Heart left ventricle (tissue), 16 donors: ENCODE measurements at regions of chr7 and their contacts with region 1.

Region 1: DNA sequence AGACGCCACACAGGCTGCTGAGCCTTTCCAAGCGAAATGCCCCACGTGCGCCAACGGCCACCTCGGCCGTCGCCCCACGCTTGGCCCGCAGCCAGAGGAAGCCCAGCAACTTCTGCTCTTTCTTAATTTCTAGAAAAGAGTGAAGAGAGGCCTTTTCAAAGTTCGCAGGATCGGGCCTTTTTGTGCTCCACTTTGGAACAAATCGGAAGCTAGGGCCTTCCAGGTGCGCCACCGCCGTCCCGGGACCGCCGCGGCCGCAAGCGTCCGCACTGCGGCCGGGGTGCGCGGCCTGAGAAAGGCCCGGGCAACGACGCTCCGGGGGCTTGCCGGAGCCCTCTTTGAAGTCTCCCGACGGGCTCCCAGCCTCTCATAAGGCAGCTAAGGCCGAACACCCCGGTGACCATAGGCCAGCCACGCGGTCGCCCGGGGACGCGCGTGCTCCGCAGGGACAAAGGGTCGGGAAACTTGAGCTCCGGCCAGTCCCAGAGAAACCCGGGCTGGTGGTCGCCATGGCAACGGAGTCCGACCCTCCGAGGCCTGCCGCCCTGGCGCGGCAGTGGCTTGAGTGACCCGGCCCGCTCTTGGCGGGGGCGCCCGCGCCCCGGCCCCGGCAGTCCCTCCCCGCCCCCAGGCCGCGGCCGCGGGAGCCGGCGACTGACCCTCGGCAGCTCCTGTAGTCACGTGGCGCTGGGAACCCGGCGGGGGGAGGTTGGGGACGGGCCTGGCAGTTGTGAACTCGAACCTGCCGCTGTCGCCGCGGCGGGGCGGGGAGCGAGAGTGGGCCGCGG is at the start of gene REPIN1:
- DNase-seq: peak; percentile 95 to 97 (median 96)
- ATAC-seq: peak; percentile 78 to 90 (median 84)
- H3K4me3 ChIP-seq: peak within 1 kb of the TSS; percentile 64 to 97 (median 90)
- H3K27ac ChIP-seq: peak within 1 kb of the TSS; percentile 90 to 99 (median 97)
- H3K4me1 ChIP-seq: peaks cover 2 to 54% (median 27%) of the 10 kb centered on the region in 12 donors
- H3K27me3 ChIP-seq: no peaks in the 10 kb centered on the region
- CTCF ChIP-seq: no peak
- POLR2A ChIP-seq: peak in 1 of 2 donors; percentile 52
- total RNA-seq, gene REPIN1: 90.4 to 141 (median 100) TPM

Region 2: GRCh38 chr7:150356265-150356897 is 11.9 kb before region 1 on chr7:
- intact Hi-C with region 1: no loop called
- DNase-seq: no peak
- ATAC-seq: no peak
- H3K4me3 ChIP-seq: no peak overlapping the region
- H3K27ac ChIP-seq: no peak overlapping the region
- H3K4me1 ChIP-seq: peaks cover 0 to 12% (median 0%) of the 10 kb centered on the region in 12 donors
- H3K27me3 ChIP-seq: no peaks in the 10 kb centered on the region
- CTCF ChIP-seq: peak; percentile 49 to 79 (median 68)
- POLR2A ChIP-seq: no peak

Region 3: DNA sequence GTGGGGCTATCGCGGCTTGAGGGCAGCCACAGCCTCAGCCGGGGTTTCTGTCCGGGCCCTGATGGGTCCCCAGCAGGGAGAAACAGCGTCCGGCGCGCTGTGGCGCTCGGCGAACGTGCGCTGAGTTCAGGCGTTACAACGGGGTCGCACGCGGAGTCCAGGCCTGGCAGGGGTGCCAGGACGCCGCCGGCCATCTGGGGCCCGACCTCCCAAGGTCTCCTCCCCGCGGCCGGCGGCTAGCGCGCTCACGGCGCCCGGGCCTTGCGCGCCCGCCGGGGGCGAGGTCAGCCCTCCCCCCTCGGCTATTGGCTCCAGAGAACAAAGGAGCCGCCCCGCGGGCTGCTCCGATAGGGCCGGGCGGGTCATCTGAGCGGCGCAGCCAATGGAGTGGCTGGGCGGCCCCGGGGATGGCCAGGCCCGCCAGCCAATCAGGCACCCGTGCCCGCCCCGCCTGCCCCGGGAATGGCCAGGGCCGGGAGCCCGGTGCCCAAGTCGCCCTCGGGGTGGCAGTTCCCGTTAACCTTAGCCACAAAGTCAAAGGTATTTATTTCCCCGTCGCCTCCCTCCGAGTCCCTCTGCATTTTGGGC is 10.7 kb after region 1 on chr7 and contains the start of gene ZNF775:
- intact Hi-C with region 1: loop called in 1 of 10 experiments (anchors 1 kb)
- DNase-seq: peak; percentile 97 to 99 (median 98)
- ATAC-seq: peak; percentile 97 to 99 (median 98)
- H3K4me3 ChIP-seq: peak within 1 kb of the TSS; percentile 71 to 100 (median 86)
- H3K27ac ChIP-seq: peak within 1 kb of the TSS; percentile 81 to 99 (median 92)
- H3K4me1 ChIP-seq: peaks cover 0 to 50% (median 21%) of the 10 kb centered on the region in 12 donors
- H3K27me3 ChIP-seq: no peaks in the 10 kb centered on the region
- CTCF ChIP-seq: peak in 2 of 12 donors; percentile 1 to 8
- POLR2A ChIP-seq: peak; percentile 48 to 95
- total RNA-seq, gene ZNF775: 2.1 to 5.0 (median 3.3) TPM

Region 4: GRCh38 chr7:150404805-150405583 is 36.7 kb after region 1 on chr7:
- intact Hi-C with region 1: loop called in 8 of 10 experiments (anchors 1 to 5 kb)
- DNase-seq: peak; percentile 91 to 95 (median 93)
- ATAC-seq: peak; percentile 85 to 96 (median 94)
- H3K4me3 ChIP-seq: peak overlapping the region; percentile 54 to 80 (median 72)
- H3K27ac ChIP-seq: peak overlapping the region; percentile 86 to 98 (median 96)
- H3K4me1 ChIP-seq: peaks cover 0 to 34% (median 22%) of the 10 kb centered on the region in 12 donors
- H3K27me3 ChIP-seq: no peaks in the 10 kb centered on the region
- CTCF ChIP-seq: peak in 7 of 12 donors; percentile 6 to 43 (median 13)
- POLR2A ChIP-seq: peak in 1 of 2 donors; percentile 78

Region 5: DNA sequence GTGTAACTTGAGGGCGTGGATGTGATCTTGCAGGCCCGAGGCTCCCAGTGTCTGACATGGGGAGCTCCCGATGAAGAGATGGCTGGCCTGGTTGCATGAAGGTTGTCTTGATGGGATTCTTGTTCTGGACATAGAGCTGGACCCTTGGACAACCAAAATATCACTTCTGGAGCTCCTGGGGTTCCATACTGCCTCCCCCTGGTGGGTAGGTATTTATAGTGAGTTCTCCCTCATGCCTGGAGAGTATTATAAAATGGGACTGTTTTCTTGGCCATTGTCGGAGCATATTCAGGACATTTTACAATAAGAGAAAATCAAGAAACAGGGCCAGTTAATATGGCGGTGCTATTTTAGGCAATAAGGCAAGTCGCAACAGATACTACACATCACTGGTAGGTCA is 49.6 kb after region 1 on chr7:
- intact Hi-C with region 1: no loop called
- DNase-seq: peak in 1 of 5 donors; percentile 4
- ATAC-seq: no peak
- H3K4me3 ChIP-seq: no peak overlapping the region
- H3K27ac ChIP-seq: no peak overlapping the region
- H3K4me1 ChIP-seq: peaks cover 0 to 6% (median 0%) of the 10 kb centered on the region in 12 donors
- H3K27me3 ChIP-seq: no peaks in the 10 kb centered on the region
- CTCF ChIP-seq: no peak
- POLR2A ChIP-seq: no peak

Region 6: DNA sequence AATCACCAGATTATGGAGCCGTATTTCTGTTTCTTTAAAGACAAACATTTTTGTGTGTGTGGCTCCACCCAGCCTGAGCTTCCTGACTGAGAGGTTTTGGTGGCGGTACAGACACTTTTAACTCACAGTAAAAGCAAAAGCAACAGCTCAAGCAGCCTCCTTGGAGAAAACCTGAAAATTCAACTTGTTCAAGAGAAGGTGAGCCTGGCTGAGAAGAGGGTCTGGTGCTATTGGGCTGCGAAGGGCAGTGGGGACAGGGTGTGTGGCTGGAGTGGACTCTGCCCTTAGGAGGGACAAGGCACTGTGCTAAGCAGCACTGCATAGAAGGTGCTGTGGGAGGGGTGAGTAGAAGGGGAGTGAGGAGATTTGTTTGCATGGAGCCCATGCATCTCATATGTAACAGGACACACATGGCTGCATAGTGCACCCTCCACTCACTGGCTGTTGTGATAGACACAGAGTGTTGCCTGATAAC is 146.5 kb after region 1 on chr7 and contains the start of gene GIMAP7:
- intact Hi-C with region 1: no loop called
- DNase-seq: peak in 3 of 5 donors; percentile 34 to 38 (median 35)
- ATAC-seq: peak; percentile 75 to 87 (median 78)
- H3K4me3 ChIP-seq: peak within 1 kb of the TSS; percentile 24 to 69 (median 60)
- H3K27ac ChIP-seq: peak within 1 kb of the TSS; percentile 66 to 92 (median 85)
- H3K4me1 ChIP-seq: peaks cover 0 to 21% (median 2%) of the 10 kb centered on the region in 12 donors
- H3K27me3 ChIP-seq: no peaks in the 10 kb centered on the region
- CTCF ChIP-seq: no peak
- POLR2A ChIP-seq: peak in 1 of 2 donors; percentile 68
- total RNA-seq, gene GIMAP7: 14.4 to 46.8 (median 18.9) TPM

Region 7: GRCh38 chr7:150753826-150754603 is 385.7 kb after region 1 on chr7:
- intact Hi-C with region 1: loop called in 1 of 10 experiments (anchors 5 kb)
- DNase-seq: no peak
- ATAC-seq: peak; percentile 26 to 60 (median 41)
- H3K4me3 ChIP-seq: no peak overlapping the region
- H3K27ac ChIP-seq: peak overlapping the region in 9 of 12 donors; percentile 24 to 90 (median 81)
- H3K4me1 ChIP-seq: peaks cover 0 to 61% (median 41%) of the 10 kb centered on the region in 12 donors
- H3K27me3 ChIP-seq: no peaks in the 10 kb centered on the region
- CTCF ChIP-seq: peak in 9 of 12 donors; percentile 23 to 57 (median 44)
- POLR2A ChIP-seq: no peak

Region 8: DNA sequence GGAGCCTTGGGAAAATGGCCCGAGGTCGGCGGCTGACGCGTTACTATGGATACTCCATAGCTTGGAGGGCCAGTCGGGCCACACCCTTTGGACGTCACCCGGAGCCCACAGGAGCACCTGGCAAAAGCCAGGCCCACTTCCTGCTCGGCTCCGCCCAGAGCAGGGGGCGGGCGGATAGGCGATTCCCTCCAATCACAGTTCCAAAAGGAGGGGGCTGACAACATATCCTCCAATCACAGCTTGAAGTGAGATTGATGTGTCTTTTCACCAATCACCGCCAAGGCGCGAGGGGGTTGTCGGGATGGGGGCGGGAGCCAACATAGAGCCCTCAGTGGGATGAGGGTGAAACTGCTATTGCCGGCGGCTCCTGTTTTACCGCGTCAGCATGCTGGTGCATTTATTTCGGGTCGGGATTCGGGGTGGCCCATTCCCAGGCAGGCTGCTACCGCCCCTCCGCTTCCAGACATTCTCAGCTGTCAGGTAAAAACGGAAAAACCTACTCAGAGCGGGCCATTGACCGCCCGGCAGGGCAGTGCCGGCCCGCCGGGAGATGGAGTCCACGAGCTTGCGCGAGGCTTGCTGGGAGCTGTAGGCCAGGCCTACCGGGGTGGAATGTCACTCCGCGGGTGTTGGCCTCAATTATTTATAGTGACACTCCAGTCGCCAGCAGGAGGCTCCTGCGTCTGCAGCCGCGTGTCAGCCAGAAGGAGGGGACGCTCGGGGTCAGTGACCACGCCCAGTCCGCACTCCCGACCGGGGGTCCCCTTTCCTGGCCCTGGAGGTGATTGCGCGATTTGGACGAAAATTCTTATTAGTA is 660.0 kb after region 1 on chr7 and contains the start of gene ABCB8:
- intact Hi-C with region 1: loop called in 1 of 10 experiments (anchors 5 kb)
- DNase-seq: peak; percentile 96 to 99 (median 98)
- ATAC-seq: peak; percentile 96 to 98 (median 96)
- H3K4me3 ChIP-seq: peak within 1 kb of the TSS; percentile 62 to 91 (median 76)
- H3K27ac ChIP-seq: peak within 1 kb of the TSS; percentile 15 to 90 (median 85)
- H3K4me1 ChIP-seq: peaks cover 0 to 22% (median 15%) of the 10 kb centered on the region in 12 donors
- H3K27me3 ChIP-seq: peaks cover 0 to 4% (median 0%) of the 10 kb centered on the region in 9 donors
- CTCF ChIP-seq: peak; percentile 43 to 77 (median 60)
- POLR2A ChIP-seq: peak in 1 of 2 donors; percentile 74
- total RNA-seq, gene ABCB8: 13.6 to 34.5 (median 26.0) TPM